A549 (cell line): ENCODE measurements at regions of chr10 and their contacts with region 1.

Region 1: GRCh38 chr10:46228563-46229071 is 58.2 kb upstream of the ANTXRL start:
- DNase-seq: peak; percentile 85 to 89
- ATAC-seq: peak; percentile 91 to 97
- H3K4me3 ChIP-seq: no peak overlapping the region
- H3K27ac ChIP-seq: peak overlapping the region; percentile 65 to 78
- H3K4me1 ChIP-seq: peaks cover 22% of the 10 kb centered on the region
- CTCF ChIP-seq: peak; percentile 89
- EP300 ChIP-seq: no peak
- POLR2A ChIP-seq: no peak
- RAD21 ChIP-seq: peak; percentile 97 to 99

Region 2: DNA sequence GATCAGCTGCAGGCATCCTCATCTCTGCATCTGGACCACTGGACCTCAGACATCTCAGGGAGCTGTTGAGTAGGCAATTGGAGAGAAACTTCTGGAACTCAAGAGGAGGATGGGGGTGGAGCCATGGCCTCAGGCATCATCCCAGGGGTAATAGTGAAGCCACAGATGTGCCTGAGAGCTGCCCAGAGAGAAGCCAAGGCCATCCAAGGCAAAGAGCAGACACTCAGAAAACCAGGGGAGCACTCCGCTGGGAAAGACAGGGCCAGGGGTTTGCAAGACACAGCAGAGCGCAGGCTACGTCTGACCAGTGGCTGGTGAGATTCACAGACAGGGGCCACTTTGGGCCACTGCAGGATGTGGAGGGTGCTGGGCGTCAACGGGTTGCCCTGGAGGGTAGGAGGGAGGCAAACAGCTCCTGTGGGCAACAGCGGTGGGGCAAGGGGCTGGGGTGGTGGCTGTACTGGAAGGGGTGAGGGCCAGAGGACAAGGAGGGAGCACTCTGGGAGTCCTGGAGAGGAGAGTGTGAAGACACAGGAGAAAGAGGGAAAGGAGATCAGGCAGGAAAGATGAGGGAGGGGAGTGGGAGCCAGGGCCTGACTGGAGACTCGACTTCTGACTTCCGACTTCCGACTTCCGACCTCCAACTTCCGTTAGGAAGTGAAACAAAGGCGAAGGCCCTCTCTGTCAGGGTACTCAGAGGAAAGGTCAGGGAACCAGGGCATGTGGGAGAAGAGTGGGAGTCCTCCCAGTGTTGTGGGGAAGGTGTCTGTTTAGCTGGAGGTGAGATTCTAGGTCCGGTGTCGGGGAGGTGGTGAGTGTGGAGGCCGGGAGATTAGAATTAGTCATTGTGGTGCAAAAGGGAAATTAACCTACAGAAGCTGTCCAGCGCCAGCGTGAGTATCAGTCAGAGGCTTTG is 11.5 kb before region 1 on chr10:
- CTCF ChIA-PET with region 1: interaction called, 46 read pairs
- POLR2A ChIA-PET with region 1: no interaction called
- DNase-seq: no peak
- ATAC-seq: no peak
- H3K4me3 ChIP-seq: no peak overlapping the region
- H3K27ac ChIP-seq: no peak overlapping the region
- H3K4me1 ChIP-seq: no peaks in the 10 kb centered on the region
- CTCF ChIP-seq: no peak
- EP300 ChIP-seq: no peak
- POLR2A ChIP-seq: no peak
- RAD21 ChIP-seq: no peak

Region 3: GRCh38 chr10:46239247-46239646 is 10.6 kb after region 1 on chr10:
- CTCF ChIA-PET with region 1: interaction called, 36 read pairs
- POLR2A ChIA-PET with region 1: no interaction called
- DNase-seq: no peak
- ATAC-seq: no peak
- H3K4me3 ChIP-seq: no peak overlapping the region
- H3K27ac ChIP-seq: no peak overlapping the region
- H3K4me1 ChIP-seq: no peaks in the 10 kb centered on the region
- CTCF ChIP-seq: no peak
- EP300 ChIP-seq: no peak
- POLR2A ChIP-seq: no peak
- RAD21 ChIP-seq: no peak

Region 4: DNA sequence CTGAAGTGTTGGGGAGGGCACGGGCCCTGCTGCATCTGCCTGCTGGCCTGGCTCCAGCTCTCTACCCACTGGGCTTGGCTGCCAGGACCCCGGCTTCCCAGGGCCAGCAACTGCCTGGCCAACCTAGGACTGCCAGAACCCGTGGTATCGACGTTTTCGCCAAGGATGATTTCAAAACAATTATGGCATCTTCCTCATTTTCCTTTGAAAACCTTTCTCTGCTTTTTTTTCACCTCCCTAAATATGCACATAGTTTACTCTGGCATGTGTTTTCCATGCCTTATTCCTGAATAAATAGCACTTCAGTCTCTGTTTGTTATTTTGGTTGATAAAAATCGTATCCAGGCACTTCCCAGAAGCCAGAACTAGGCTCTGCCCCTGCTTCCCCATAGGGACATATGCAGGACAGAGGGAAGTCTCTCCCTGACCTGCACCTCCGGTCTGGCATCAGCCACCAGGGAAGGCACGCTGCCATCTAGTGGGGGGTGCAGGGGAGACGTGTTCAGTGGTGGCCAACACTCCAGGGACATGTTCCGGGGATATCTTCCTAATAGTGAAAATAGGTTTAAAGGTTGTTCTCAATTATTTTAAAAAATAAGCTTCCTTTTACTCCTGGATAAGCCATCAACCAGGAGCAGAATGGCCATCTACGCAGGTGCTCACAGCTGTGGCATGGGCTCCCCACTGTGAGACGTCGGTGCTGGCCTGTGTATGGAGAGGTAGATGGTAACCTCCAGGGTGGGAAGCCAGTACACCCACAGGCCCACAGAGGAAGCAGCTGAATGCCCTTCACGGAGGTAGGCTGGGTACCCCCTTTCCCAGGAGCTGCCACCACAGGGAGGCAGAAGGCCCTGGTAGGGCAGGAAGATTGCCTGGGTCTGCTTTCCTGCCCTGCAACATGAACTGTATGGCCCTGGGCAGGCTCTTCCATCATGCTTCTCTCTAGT is 27.5 kb after region 1 on chr10:
- CTCF ChIA-PET with region 1: interaction called, 31 read pairs
- POLR2A ChIA-PET with region 1: no interaction called
- DNase-seq: peak; percentile 75 to 87
- ATAC-seq: peak; percentile 96 to 98
- H3K4me3 ChIP-seq: no peak overlapping the region
- H3K27ac ChIP-seq: peak overlapping the region; percentile 17 to 71; a peak in 5 of 6 replicates
- H3K4me1 ChIP-seq: peaks cover 5% of the 10 kb centered on the region
- CTCF ChIP-seq: peak; percentile 70
- EP300 ChIP-seq: no peak
- POLR2A ChIP-seq: no peak
- RAD21 ChIP-seq: peak; percentile 56 to 68; a peak in 3 of 5 replicates

Region 5: DNA sequence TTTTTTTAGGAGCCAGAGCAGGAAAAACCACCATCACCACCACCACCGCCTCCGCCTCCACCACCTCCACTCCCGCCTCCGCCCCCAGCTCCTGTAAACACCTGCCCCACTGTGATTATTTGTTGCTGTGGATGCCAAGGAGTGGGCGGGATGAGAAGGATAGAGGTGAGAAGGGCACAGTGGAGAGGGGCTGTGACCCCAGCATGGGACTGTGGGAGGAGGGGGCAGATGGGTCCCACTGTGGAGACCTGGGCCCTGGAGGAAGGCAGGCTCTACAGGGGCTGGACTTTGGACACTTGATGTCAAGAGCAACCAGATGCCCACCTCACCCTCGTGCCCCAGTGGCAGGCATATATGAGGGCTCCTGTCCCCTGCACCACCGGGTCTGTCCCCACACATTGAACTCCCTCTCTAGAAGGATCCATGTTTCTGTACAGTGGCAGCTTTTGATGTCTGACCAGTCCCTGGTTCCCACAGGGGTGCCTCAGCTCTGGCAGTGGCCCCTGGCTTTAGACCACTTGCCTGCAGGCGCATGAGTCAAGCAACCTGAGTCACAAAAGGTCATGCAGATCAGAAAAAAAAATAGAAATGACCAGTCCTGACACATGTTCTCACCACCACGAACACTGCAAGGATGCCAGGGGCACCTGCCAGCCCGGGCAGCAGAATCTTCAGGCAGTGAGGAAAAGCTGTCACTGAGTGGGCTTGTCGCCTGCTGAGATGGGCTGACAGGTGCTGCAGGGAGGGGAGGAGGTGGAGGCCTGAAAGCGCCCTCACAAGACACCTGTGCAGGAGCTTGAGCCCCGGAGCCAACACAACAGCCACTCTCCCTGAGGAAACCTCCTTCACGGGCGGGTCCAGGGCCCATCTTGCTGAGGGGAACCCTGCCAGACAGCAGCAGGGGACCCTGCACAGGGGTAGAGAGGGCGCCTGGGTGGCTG is 83.2 kb after region 1 on chr10:
- CTCF ChIA-PET with region 1: no interaction called
- POLR2A ChIA-PET with region 1: no interaction called
- DNase-seq: no peak
- ATAC-seq: no peak
- H3K4me3 ChIP-seq: no peak overlapping the region
- H3K27ac ChIP-seq: no peak overlapping the region
- H3K4me1 ChIP-seq: no peaks in the 10 kb centered on the region
- CTCF ChIP-seq: no peak
- EP300 ChIP-seq: no peak
- POLR2A ChIP-seq: no peak
- RAD21 ChIP-seq: no peak

Region 6: DNA sequence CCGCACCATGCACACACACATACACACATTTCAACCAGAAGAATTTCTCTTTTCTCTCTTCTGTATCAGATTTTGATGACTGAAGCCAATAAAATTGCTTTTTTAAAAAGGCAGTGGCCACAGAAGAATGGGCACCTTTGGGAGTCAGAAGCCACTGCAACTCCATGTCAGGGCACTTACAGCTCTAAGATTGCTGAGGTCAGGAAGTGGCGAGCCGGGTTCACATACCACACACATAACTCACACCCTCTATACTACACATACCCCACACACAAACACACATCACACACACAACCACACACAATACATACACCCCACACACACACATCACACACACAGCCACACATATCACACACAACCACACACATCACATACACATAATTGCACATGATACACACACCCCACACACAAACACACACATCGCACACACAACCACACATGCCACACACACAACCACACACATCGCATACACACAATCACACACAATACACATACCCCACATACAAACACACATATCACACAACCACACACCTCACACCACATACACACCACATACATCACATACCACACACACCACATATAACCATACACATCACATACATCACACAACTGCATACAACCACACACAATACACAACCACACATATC is 296.7 kb after region 1 on chr10:
- CTCF ChIA-PET with region 1: interaction called, 12 read pairs
- POLR2A ChIA-PET with region 1: interaction called, 6 read pairs
- DNase-seq: peak; percentile 94 to 96
- ATAC-seq: peak; percentile 22 to 23; a peak in 5 of 6 replicates
- H3K4me3 ChIP-seq: no peak overlapping the region
- H3K27ac ChIP-seq: peak overlapping the region; percentile 92 to 95
- H3K4me1 ChIP-seq: peaks cover 81% of the 10 kb centered on the region
- CTCF ChIP-seq: no peak
- EP300 ChIP-seq: no peak
- POLR2A ChIP-seq: no peak
- RAD21 ChIP-seq: no peak

Region 7: DNA sequence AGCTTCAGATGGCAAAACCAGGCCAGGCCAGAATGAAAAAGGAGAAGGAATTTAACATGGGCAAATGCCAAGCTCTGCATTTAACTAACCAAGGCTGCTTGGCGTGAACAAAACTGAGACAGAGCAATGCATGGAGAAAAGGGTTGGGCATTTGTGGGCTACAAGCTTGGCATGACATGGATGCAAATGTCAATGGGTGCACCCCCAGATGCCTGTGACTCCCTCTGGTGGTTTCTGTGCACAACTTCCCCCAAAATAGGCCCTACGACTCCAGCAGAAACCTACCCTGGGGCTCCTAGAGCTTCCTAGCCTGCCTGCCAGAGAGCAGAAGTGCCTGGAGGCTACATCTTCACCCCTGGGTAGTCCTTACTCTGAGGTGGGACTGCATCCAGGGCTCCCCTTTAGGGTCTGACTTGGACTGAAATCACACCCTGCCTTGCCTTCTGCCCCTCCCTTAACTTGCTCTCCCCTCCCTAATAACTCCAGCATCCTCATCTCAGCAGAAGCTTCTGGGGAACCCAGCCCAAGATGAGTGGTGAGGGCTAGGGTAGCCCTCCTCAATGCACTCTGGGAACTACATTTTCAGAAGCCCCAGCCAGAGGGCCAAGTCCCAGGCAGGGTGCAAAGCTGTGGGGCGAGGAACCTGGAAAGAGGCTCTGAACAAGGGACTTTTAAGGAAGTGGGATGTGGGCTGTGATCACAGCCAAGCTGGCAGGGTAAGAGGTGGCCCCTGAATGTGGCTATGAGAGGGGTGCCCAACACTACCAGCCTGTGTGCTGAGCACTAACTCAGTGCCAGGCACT is 316.6 kb after region 1 on chr10:
- CTCF ChIA-PET with region 1: interaction called, 28 read pairs
- POLR2A ChIA-PET with region 1: no interaction called
- DNase-seq: peak; percentile 86 to 89
- ATAC-seq: peak; percentile 9 to 22; a peak in 4 of 6 replicates
- H3K4me3 ChIP-seq: no peak overlapping the region
- H3K27ac ChIP-seq: peak overlapping the region; percentile 89 to 97
- H3K4me1 ChIP-seq: peaks cover 92% of the 10 kb centered on the region
- CTCF ChIP-seq: peak; percentile 64
- EP300 ChIP-seq: no peak
- POLR2A ChIP-seq: no peak
- RAD21 ChIP-seq: peak in 1 of 2 experiments; percentile 70; a peak in 3 of 5 replicates

Region 8: GRCh38 chr10:46556515-46557315 is 328.1 kb after region 1 on chr10 and contains the start of gene GPRIN2:
- CTCF ChIA-PET with region 1: interaction called, 19 read pairs
- POLR2A ChIA-PET with region 1: no interaction called
- DNase-seq: peak in 1 of 2 experiments; percentile 28
- ATAC-seq: peak; percentile 32 to 42
- H3K4me3 ChIP-seq: peak within 1 kb of the TSS; percentile 70
- H3K27ac ChIP-seq: peak within 1 kb of the TSS; percentile 88 to 89
- H3K4me1 ChIP-seq: peaks cover 60% of the 10 kb centered on the region
- CTCF ChIP-seq: no peak
- EP300 ChIP-seq: no peak
- POLR2A ChIP-seq: no peak
- RAD21 ChIP-seq: no peak
- polyA plus RNA-seq, gene GPRIN2: 8.8 and 9.4 TPM in 2 replicates